GM13977 (cell line): ENCODE measurements at regions of chr11 and their contacts with region 1.

Region 1: DNA sequence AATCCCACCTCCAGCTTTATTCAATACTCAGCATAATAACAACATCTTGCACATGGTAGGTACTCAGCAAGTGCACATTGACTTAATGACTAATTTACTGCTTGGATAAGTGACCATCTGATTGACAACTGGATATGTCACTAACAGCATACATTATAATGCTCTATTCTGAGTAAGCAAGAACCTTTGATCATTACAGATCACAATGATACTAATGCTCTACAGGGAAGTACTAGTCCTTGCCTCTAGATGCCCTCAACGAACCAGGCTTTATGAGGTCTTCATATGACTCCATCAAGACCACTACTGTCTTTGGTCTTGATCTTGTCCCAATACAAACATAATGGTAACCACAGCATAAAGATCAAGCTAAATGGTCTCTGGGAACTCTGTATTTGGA is 167.6 kb upstream of the MTMR2 start:
- DNase-seq: no peak
- CTCF ChIP-seq: peak; percentile 37

Region 2: GRCh38 chr11:96015911-96016565 is 75.4 kb before region 1 on chr11:
- in situ Hi-C with region 1: no loop called
- DNase-seq: peak; percentile 17
- CTCF ChIP-seq: no peak

Region 3: DNA sequence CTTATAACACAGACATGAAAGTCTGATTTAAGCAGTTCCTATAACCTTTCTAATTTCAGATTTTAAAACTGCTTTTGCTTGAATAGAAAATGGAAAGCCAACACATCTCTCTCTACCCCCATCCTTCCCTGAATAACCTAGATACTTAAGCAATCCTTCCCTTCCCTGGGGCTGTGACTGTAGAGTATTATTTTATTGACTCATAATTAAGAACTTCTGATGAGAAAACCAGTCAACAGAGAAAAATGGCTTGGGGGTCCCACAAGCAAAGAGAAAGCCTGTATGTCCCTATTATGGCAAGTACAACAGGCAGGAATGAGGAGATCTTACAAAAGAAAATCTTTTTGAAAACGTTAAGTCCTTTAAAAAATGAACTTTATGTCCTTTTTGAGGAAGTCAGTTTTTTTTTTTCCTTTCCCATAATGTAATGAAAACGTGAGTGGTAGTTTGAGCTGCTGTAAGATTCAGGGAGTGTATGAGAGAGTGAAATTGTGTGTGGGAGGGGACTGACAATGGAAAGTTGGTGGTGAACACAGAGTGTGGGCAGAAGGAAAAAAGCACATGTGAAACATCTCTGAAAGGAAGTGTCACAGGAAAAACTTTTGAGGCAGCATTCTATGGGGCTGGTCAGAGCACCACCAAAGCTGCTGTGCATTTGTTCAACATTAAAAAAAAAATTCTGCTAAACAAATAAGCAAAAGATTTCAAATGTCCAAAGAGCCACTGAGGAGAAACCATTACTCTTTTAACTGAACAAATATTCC is 96.9 kb after region 1 on chr11:
- in situ Hi-C with region 1: loop called (anchors 25 kb)
- DNase-seq: no peak
- CTCF ChIP-seq: no peak

Region 4: GRCh38 chr11:96228473-96228891 is 137.0 kb after region 1 on chr11:
- in situ Hi-C with region 1: no loop called
- DNase-seq: no peak
- CTCF ChIP-seq: no peak